HCT116 (cell line): ENCODE measurements at regions of chr4 and their contacts with region 1.

Region 1: GRCh38 chr4:144174401-144175067 is 34.0 kb upstream of the GYPA start:
- DNase-seq: peak; percentile 44
- ATAC-seq: peak; percentile 87
- H3K4me3 ChIP-seq: no peak overlapping the region
- H3K27ac ChIP-seq: no peak overlapping the region
- H3K4me1 ChIP-seq: no peaks in the 10 kb centered on the region
- H3K27me3 ChIP-seq: no peaks in the 10 kb centered on the region
- CTCF ChIP-seq: peak; percentile 9 to 60 (median 54); a peak in 4 of 6 replicates
- POLR2A ChIP-seq: no peak
- RAD21 ChIP-seq: peak; percentile 81

Region 2: DNA sequence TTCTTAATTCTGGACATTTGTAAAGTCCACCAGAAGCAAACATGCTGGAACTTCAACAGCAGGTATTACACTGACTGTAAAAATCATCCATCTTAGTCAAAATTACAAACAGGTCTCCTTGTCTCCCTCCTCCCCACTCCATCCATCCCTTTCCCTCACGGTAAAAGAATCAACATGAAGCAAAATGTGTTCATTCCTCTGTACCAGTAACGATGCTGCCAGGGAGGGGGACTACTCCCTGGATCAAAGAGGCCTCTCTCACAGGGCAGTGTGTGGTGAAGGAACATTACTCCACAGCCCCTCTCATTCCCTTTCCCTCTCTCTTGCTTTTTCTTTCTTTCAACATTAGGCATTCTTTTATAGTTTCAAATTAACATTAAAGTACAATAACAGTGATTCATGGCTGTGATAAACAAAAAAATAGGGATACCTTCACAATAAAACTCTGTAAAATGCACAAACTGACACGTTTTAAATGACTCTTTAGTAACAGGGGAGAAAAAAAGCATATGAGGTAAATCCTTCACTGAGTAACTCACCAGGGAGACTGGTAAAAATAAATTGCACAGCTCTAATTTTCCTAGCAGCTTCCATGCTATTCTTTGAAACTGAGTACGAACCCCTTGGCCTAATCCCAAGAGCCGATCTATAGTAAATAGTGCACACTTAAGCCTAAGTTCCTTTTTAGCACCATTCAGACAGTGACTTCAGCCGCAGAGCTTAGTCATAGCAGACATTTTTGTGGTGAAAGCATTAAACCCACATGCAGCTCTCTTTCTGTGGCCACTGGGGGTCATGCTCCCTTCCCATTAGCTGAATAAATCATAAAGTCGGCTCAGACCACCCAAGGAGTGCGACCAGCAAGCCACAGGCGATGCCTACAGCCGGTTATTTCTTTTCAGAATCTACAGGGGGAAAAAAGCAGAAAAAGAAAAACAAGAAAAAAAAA is 181.5 kb after region 1 on chr4:
- CTCF ChIA-PET with region 1: no interaction called
- POLR2A ChIA-PET with region 1: no interaction called
- RAD21 ChIA-PET with region 1: no interaction called
- intact Hi-C with region 1: no loop called
- DNase-seq: peak; percentile 67
- ATAC-seq: peak; percentile 95
- H3K4me3 ChIP-seq: peak overlapping the region in 1 of 2 experiments; percentile 5; a peak in 1 of 4 replicates
- H3K27ac ChIP-seq: no peak overlapping the region
- H3K4me1 ChIP-seq: peaks cover 12 to 13% of the 10 kb centered on the region in 2 experiments; a peak in 3 of 4 replicates
- H3K27me3 ChIP-seq: peaks cover 55% of the 10 kb centered on the region
- CTCF ChIP-seq: peak in 2 of 3 experiments; percentile 39 to 50; a peak in 3 of 6 replicates
- POLR2A ChIP-seq: no peak
- RAD21 ChIP-seq: peak; percentile 37

Region 3: GRCh38 chr4:144754562-144755410 is 580.3 kb after region 1 on chr4:
- CTCF ChIA-PET with region 1: no interaction called
- POLR2A ChIA-PET with region 1: no interaction called
- RAD21 ChIA-PET with region 1: no interaction called
- intact Hi-C with region 1: loop called (anchors 10 kb)
- DNase-seq: peak; percentile 19
- ATAC-seq: peak; percentile 78
- H3K4me3 ChIP-seq: no peak overlapping the region
- H3K27ac ChIP-seq: no peak overlapping the region
- H3K4me1 ChIP-seq: peaks cover 0 to 4% of the 10 kb centered on the region in 2 experiments; a peak in 1 of 4 replicates
- H3K27me3 ChIP-seq: no peaks in the 10 kb centered on the region
- CTCF ChIP-seq: peak; percentile 36 to 58 (median 53); a peak in 5 of 6 replicates
- POLR2A ChIP-seq: no peak
- RAD21 ChIP-seq: peak; percentile 67

Region 4: GRCh38 chr4:144787365-144788258 is 613.1 kb after region 1 on chr4:
- CTCF ChIA-PET with region 1: no interaction called
- POLR2A ChIA-PET with region 1: no interaction called
- RAD21 ChIA-PET with region 1: no interaction called
- intact Hi-C with region 1: loop called (anchors 2 kb)
- DNase-seq: peak; percentile 31
- ATAC-seq: peak; percentile 63
- H3K4me3 ChIP-seq: no peak overlapping the region
- H3K27ac ChIP-seq: no peak overlapping the region
- H3K4me1 ChIP-seq: peaks cover 0 to 5% of the 10 kb centered on the region in 2 experiments; a peak in 1 of 4 replicates
- H3K27me3 ChIP-seq: no peaks in the 10 kb centered on the region
- CTCF ChIP-seq: peak; percentile 16 to 67 (median 50); a peak in 5 of 6 replicates
- POLR2A ChIP-seq: no peak
- RAD21 ChIP-seq: peak; percentile 57